ENCODE measurements at regions of chr3 and their contacts with region 1.

Region 1: GRCh38 chr3:42184651-42185443 is 81.1 kb downstream of the CCK start:
- DNase-seq: no peak
- H3K4me3 ChIP-seq: no peak overlapping the region
- CTCF ChIP-seq: no peak

Region 2: GRCh38 chr3:42118762-42119361 is 66.0 kb before region 1 on chr3:
- CTCF ChIA-PET with region 1: interaction called, 38 read pairs
- POLR2A ChIA-PET with region 1: no interaction called
- DNase-seq: no peak
- H3K4me3 ChIP-seq: no peak overlapping the region
- CTCF ChIP-seq: peak; percentile 36

Region 3: GRCh38 chr3:42394579-42395288 is 209.9 kb after region 1 on chr3:
- CTCF ChIA-PET with region 1: no interaction called
- POLR2A ChIA-PET with region 1: no interaction called
- DNase-seq: no peak
- H3K4me3 ChIP-seq: no peak overlapping the region
- CTCF ChIP-seq: no peak